Ascending aorta (tissue), 2 donors: ENCODE measurements at regions of chr19 and their contacts with region 1.

Region 1: DNA sequence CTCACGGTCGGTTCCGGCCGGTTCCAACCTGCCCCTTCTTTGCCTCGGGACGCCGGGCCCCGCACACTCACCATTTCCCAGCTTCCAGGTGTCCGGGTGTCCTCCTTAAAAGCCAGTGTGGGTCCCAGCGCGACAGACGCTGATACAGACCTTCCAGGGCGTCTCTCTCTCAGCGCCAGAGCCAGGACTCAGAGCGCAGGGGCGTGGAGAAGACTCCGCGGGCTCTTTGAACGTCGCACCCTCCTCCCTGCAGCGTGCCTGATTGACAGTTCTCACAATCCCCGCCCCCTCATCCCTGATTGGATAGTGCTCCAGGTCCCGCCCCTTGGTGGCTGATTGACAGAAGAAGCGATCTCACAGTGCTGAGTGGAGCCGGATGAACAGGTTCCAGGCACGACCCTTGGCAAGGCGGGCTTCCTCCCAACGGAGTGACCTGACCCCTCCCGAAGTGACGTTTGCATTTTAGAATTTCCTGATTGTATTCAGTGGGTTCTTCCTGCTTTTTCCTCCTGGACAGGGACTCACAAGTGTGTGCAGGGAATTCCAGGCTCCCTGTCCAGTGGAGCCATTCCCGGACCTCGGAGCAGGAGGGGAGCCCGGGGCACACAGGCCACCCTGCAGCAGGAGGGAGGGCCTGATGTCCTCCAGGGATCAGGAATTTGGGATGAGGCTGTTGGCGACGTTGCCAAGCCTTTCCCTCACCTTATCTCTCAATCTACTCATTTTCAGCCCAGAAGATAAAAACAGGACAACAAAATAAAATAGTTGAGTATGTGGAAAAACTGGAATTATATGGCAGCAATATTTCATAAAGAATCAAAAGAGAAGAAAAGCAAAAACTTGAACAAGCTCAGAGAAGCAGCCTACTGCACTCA is at the start of gene ZNF823:
- DNase-seq: peak; percentile 96 to 100
- H3K4me3 ChIP-seq: peak within 1 kb of the TSS; percentile 63 to 98
- H3K27ac ChIP-seq: peak within 1 kb of the TSS; percentile 85 to 88
- H3K4me1 ChIP-seq: peaks cover 0 to 7% of the 10 kb centered on the region in 2 donors
- H3K27me3 ChIP-seq: no peaks in the 10 kb centered on the region
- CTCF ChIP-seq: no peak
- total RNA-seq, gene ZNF823: 5.2 TPM

Region 2: DNA sequence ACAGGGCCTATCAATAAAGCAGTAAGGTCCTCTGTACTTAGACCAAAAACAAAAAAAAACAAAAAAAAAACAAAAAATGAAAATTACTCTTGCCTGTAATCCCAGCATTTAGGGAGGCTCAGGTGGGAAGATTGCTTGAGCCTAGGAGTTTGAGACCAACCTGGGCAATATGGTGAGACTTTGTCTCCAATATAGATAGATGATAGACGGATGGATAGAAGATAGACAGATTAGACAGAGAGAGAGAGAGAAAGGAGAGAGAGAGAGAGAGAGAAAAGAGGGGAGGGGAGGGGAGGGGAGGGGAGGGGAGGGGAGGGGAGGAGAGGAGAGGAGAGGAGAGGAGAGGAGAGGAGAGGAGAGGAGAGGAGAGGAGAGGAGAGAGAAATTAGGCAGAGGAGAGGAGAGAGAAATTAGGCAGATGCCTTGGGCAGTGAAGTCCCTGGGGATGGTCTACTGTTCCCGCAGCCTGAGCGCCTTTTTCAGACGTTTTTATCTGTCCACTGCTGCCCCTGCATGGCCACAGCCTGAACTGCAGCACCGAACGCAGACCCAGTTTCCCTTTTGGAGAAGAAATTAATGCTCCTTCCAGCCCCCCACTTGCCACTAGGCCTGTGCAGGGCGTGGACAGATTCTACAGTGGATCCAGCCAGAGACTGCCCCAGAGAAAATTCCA is 151.5 kb before region 1 on chr19:
- intact Hi-C with region 1: no loop called
- DNase-seq: peak in 1 of 2 donors; percentile 82
- H3K4me3 ChIP-seq: no peak overlapping the region
- H3K27ac ChIP-seq: no peak overlapping the region
- H3K4me1 ChIP-seq: peaks cover 0 to 2% of the 10 kb centered on the region in 2 donors
- H3K27me3 ChIP-seq: no peaks in the 10 kb centered on the region
- CTCF ChIP-seq: peak; percentile 88 to 91 (median 89)

Region 3: GRCh38 chr19:11597202-11598102 is 141.5 kb before region 1 on chr19 and contains the start of gene ZNF627:
- intact Hi-C with region 1: no loop called
- DNase-seq: peak; percentile 99 to 100
- H3K4me3 ChIP-seq: peak within 1 kb of the TSS; percentile 73 to 100
- H3K27ac ChIP-seq: peak within 1 kb of the TSS; percentile 79 to 81
- H3K4me1 ChIP-seq: peaks cover 3 to 15% of the 10 kb centered on the region in 2 donors
- H3K27me3 ChIP-seq: no peaks in the 10 kb centered on the region
- CTCF ChIP-seq: peak in 2 of 3 experiments; percentile 13 to 38
- total RNA-seq, gene ZNF627: 7.6 TPM

Region 4: DNA sequence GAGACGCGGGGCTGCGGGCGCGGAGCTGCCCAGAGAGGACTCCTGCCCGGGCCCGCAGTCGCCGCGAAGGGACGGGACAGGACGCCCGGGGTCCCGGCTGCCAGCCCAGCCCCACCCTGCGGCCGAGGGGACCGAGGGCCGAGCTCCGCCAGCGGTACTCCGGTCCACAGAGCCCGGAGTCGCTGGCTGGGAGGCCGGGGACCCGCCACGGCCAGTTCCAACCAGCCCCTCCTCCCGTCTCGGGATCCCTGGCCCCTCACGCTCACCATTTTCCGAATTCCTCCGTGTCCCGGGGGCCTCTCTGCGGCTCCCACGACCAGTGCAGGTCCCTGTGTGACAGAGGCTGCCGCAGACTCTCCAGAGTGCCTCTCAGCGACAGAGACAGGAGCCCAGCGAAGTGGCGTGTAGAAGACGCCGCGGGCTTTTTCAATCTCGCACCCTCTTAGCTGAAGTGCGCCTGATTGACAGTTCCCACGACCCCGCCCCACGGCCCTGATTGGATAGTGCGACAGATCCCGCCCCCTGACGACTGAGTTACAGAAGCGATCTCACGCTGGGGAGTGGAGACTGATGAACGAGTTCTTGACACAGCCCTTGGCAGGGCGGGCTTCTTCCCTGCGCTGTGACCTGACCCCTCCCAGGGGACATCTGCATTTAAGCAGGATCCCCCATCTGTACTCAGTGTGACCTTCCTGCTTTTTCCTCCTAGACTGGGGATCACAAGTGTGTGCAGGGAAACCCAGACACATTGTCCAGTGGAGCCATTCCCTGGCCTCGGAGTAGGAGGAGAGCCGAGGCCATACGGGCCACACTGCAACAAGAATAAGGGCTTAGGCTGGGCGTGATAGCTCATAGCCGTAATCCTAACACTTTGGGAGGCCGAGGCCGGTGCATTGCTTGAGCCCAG is 44.2 kb before region 1 on chr19:
- intact Hi-C with region 1: loop called (anchors 1 kb)
- DNase-seq: peak; percentile 89 to 96
- H3K4me3 ChIP-seq: peak overlapping the region; percentile 61 to 89
- H3K27ac ChIP-seq: peak overlapping the region in 1 of 2 donors; percentile 55
- H3K4me1 ChIP-seq: peaks cover 0 to 2% of the 10 kb centered on the region in 2 donors
- H3K27me3 ChIP-seq: no peaks in the 10 kb centered on the region
- CTCF ChIP-seq: no peak

Region 5: GRCh38 chr19:11766597-11767591 is 27.9 kb after region 1 on chr19 and contains the start of gene ZNF441:
- intact Hi-C with region 1: loop called (anchors 1 kb)
- DNase-seq: peak; percentile 89 to 98
- H3K4me3 ChIP-seq: peak within 1 kb of the TSS; percentile 93 to 94
- H3K27ac ChIP-seq: peak within 1 kb of the TSS; percentile 91 to 95
- H3K4me1 ChIP-seq: peaks cover 0 to 11% of the 10 kb centered on the region in 2 donors
- H3K27me3 ChIP-seq: no peaks in the 10 kb centered on the region
- CTCF ChIP-seq: no peak
- total RNA-seq, gene ZNF441: 0.85 TPM

Region 6: DNA sequence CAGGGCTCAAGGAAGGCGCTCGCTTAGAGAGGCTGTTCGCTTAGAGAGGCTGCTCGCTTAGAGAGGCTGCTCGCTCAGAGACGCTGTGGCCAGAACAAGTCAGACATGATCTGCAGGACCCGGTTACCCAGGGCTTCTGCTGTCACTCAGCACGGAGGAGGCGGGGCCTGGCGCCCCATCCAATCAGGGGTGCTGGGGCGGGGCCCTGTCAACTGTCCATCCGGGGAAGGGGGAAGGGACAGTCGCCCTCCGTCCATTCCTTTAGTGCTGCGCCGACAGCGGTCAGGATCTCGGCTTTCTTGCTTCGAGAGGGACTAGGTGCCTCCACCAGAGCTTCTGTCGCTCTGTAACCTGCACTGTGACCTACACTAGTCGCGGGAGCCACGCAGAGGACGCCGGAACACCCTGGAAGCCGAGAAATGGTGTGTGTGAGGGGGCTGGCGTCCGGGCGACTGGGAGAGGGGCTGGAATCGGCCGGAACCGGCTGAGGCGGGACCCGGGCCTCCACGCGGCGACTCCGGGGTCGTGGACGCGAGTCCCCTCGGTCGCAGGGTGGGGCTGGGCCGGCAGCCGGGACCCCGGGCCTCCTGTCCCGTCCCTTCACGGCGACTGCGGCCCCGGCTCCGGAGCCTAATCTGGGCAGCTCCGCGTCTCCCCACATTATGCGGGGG is 75.2 kb after region 1 on chr19 and contains the start of gene ZNF440:
- intact Hi-C with region 1: loop called (anchors 1 kb)
- DNase-seq: peak; percentile 85 to 98
- H3K4me3 ChIP-seq: peak within 1 kb of the TSS; percentile 84 to 90
- H3K27ac ChIP-seq: peak within 1 kb of the TSS; percentile 85 to 93
- H3K4me1 ChIP-seq: peaks cover 0 to 3% of the 10 kb centered on the region in 2 donors
- H3K27me3 ChIP-seq: no peaks in the 10 kb centered on the region
- CTCF ChIP-seq: no peak
- total RNA-seq, gene ZNF440: 1.1 TPM

Region 7: GRCh38 chr19:11848594-11849469 is 109.8 kb after region 1 on chr19 and contains the start of gene ZNF439:
- intact Hi-C with region 1: loop called (anchors 1 kb)
- DNase-seq: peak; percentile 71 to 93
- H3K4me3 ChIP-seq: peak within 1 kb of the TSS; percentile 63 to 89
- H3K27ac ChIP-seq: peak within 1 kb of the TSS; percentile 53 to 62
- H3K4me1 ChIP-seq: peaks cover 2 to 3% of the 10 kb centered on the region in 2 donors
- H3K27me3 ChIP-seq: no peaks in the 10 kb centered on the region
- CTCF ChIP-seq: no peak
- total RNA-seq, gene ZNF439: 2.3 TPM

Region 8: GRCh38 chr19:11924886-11925650 is 186.1 kb after region 1 on chr19 and contains the start of gene ZNF700:
- intact Hi-C with region 1: loop called (anchors 1 kb)
- DNase-seq: peak; percentile 77 to 97
- H3K4me3 ChIP-seq: peak within 1 kb of the TSS; percentile 84 to 88
- H3K27ac ChIP-seq: peak within 1 kb of the TSS; percentile 92 to 93
- H3K4me1 ChIP-seq: peaks cover 3 to 10% of the 10 kb centered on the region in 2 donors
- H3K27me3 ChIP-seq: no peaks in the 10 kb centered on the region
- CTCF ChIP-seq: no peak
- total RNA-seq, gene ZNF700: 4.4 TPM

Region 9: DNA sequence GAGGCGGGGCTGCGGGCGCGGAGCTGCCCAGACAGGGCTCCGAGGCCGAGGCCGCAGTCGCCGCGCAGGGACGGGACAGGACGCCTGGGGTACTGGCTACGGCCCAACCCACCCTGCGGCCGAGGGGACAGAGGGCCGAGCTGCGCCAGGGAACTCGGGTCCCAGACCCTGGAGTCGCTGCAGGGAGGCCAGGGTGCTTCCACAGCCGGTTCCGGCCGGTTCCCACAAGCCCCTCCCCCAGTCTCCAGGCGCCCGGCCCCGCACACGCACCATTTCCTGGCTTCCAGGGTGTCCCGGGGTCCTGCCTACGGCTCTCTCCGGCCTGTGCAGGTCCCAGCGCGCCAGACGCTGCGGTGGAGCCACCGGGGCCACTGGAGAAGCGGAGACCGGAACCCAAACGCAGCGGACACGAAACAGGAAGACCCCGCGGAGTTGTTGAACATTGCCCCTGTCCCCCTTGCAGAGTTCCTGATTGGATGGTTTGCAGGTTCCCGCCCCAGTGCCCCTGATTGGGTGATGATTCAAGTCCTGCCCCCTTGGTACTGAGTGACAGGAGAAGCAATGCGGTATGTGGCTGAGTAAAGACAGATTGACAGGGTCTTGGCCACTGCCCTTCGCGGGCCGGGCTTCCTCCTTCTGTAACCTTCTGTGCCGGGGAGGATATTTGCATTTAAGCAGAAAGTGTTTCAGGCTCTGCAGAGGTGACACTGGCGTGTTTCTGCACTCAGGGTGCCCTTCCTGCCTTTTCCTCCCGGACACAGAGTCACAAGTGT is 812.3 kb after region 1 on chr19 and contains the start of gene ZNF564:
- intact Hi-C with region 1: loop called (anchors 1 kb)
- DNase-seq: peak; percentile 93 to 98
- H3K4me3 ChIP-seq: peak within 1 kb of the TSS; percentile 86 to 96
- H3K27ac ChIP-seq: peak within 1 kb of the TSS; percentile 85 to 96
- H3K4me1 ChIP-seq: peaks cover 0 to 18% of the 10 kb centered on the region in 2 donors
- H3K27me3 ChIP-seq: no peaks in the 10 kb centered on the region
- CTCF ChIP-seq: no peak
- total RNA-seq, gene ZNF564: 2.6 TPM